ENCODE measurements at regions of chr9 and their contacts with region 1.

Region 1: GRCh38 chr9:1939926-1940368 is 75.2 kb upstream of the SMARCA2 start:
- DNase-seq: peak; percentile 30
- H3K4me3 ChIP-seq: no peak overlapping the region
- H3K27ac ChIP-seq: no peak overlapping the region
- H3K4me1 ChIP-seq: no peaks in the 10 kb centered on the region
- H3K27me3 ChIP-seq: no peaks in the 10 kb centered on the region
- CTCF ChIP-seq: peak; percentile 79 to 86

Region 2: GRCh38 chr9:2066312-2067273 is 126.6 kb after region 1 on chr9:
- CTCF ChIA-PET with region 1: no interaction called
- dilution Hi-C with region 1: no loop called
- in situ Hi-C with region 1: no loop called
- intact Hi-C with region 1: loop called (anchors 2 kb)
- DNase-seq: no peak
- H3K4me3 ChIP-seq: no peak overlapping the region
- H3K27ac ChIP-seq: no peak overlapping the region
- H3K4me1 ChIP-seq: no peaks in the 10 kb centered on the region
- H3K27me3 ChIP-seq: no peaks in the 10 kb centered on the region
- CTCF ChIP-seq: peak in 1 of 2 donors; percentile 25

Region 3: GRCh38 chr9:2087500-2088313 is 147.8 kb after region 1 on chr9:
- CTCF ChIA-PET with region 1: no interaction called
- dilution Hi-C with region 1: no loop called
- in situ Hi-C with region 1: no loop called
- intact Hi-C with region 1: loop called (anchors 2 kb)
- DNase-seq: peak; percentile 50
- H3K4me3 ChIP-seq: no peak overlapping the region
- H3K27ac ChIP-seq: no peak overlapping the region
- H3K4me1 ChIP-seq: no peaks in the 10 kb centered on the region
- H3K27me3 ChIP-seq: no peaks in the 10 kb centered on the region
- CTCF ChIP-seq: peak; percentile 67 to 77

Measured in mammary epithelial cell (primary cell).